ENCODE measurements at regions of chr6 and their contacts with region 1.

Region 1: DNA sequence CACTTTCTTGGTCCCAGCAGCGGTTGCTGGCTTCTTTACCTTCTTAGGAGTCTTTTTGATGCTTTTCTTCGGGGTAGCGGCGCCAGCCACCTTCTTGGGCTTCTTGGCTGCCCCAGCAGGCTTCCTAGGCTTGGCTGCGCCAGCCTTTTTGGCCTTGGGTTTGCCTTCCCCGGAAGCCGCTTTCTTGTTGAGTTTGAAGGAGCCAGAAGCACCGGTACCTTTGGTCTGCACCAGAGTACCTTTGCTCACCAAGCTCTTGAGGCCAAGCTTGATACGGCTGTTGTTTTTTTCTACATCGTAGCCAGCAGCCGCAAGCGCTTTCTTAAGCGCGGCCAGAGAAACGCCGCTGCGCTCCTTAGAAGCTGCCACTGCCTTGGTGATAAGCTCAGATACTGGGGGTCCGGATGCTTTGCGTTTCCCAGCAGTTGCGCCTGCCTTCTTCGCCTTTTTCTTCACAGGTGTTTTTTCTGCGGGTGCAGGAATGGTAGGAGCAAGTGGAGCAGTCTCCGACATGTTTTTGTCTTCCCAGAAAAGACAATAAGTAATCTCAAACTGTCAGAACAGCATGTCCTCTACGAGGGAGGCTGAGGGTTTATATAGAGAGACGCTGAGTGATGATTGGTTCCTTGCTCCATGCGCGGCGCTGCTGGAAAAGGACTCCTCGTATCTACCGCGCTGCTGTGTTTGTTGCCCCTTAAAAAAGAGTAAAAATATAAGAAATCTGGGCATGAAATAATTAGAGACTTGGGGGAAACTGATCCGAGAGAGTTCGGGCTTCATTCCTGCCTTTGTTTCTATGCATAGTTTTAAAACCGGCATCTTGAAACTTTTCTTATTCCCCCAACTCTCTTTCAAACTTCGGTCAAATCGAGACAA is 130.3 kb upstream of the BTN3A2 start:
- DNase-seq: peak; percentile 70 to 87 (median 85)
- H3K4me3 ChIP-seq: peak overlapping the region; percentile 66 to 95
- H3K4me3 Mint-ChIP-seq: peak overlapping the region; percentile 93 to 99 (median 96)
- H3K27ac ChIP-seq: peak overlapping the region; percentile 83
- H3K27ac Mint-ChIP-seq: peak overlapping the region; percentile 90 to 99 (median 96)
- H3K4me1 ChIP-seq: peaks cover 23% of the 10 kb centered on the region
- H3K4me1 Mint-ChIP-seq: peaks cover 18 to 43% (median 26%) of the 10 kb centered on the region in 4 donors
- H3K27me3 ChIP-seq: no peaks in the 10 kb centered on the region
- H3K27me3 Mint-ChIP-seq: no peaks in the 10 kb centered on the region

Region 2: DNA sequence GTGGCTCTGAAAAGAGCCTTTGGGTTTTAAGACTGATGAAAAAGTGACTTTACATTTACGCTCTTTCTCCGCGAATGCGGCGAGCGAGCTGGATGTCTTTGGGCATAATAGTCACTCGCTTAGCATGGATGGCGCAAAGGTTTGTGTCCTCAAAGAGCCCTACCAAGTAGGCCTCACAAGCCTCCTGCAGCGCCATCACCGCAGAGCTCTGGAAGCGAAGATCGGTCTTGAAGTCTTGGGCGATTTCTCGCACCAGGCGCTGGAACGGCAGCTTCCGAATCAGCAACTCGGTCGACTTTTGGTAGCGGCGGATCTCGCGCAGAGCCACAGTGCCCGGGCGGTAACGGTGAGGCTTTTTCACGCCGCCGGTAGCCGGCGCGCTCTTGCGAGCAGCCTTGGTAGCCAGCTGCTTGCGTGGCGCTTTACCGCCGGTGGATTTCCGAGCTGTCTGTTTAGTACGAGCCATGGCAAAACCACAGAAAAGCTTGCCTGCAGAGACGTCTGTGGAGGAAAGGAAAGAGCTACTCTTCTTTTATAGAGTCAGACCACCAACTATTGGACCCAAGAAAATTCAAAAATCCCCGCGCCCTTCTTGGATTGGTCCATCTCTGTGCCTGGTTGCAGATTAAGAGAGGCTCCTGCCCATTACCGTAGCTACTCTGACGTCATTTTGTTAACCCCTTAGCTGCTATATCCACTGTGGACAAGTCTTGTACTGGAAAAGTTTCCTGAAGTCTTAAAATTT is 202.9 kb before region 1 on chr6:
- CTCF ChIA-PET with region 1: no interaction called
- POLR2A ChIA-PET with region 1: interaction called, 42 read pairs
- intact Hi-C with region 1: no loop called
- DNase-seq: peak; percentile 86 to 94 (median 89)
- H3K4me3 ChIP-seq: peak overlapping the region; percentile 53 to 67
- H3K4me3 Mint-ChIP-seq: peak overlapping the region; percentile 91 to 99 (median 94)
- H3K27ac ChIP-seq: peak overlapping the region; percentile 71
- H3K27ac Mint-ChIP-seq: peak overlapping the region; percentile 89 to 98 (median 96)
- H3K4me1 ChIP-seq: peaks cover 35% of the 10 kb centered on the region
- H3K4me1 Mint-ChIP-seq: peaks cover 33 to 54% (median 44%) of the 10 kb centered on the region in 4 donors
- H3K27me3 ChIP-seq: no peaks in the 10 kb centered on the region
- H3K27me3 Mint-ChIP-seq: peaks cover 0 to 3% of the 10 kb centered on the region in 2 donors

Region 3: GRCh38 chr6:26103770-26104456 is 130.7 kb before region 1 on chr6:
- CTCF ChIA-PET with region 1: no interaction called
- POLR2A ChIA-PET with region 1: interaction called, 18 read pairs
- intact Hi-C with region 1: no loop called
- DNase-seq: peak; percentile 93 to 96 (median 94)
- H3K4me3 ChIP-seq: peak overlapping the region; percentile 36 to 39
- H3K4me3 Mint-ChIP-seq: peak overlapping the region; percentile 84 to 96 (median 92)
- H3K27ac ChIP-seq: peak overlapping the region; percentile 66
- H3K27ac Mint-ChIP-seq: peak overlapping the region; percentile 96 to 100 (median 99)
- H3K4me1 ChIP-seq: peaks cover 17% of the 10 kb centered on the region
- H3K4me1 Mint-ChIP-seq: peaks cover 11 to 19% (median 15%) of the 10 kb centered on the region in 4 donors
- H3K27me3 ChIP-seq: no peaks in the 10 kb centered on the region
- H3K27me3 Mint-ChIP-seq: peaks cover 2 to 6% of the 10 kb centered on the region in 2 donors

Region 4: DNA sequence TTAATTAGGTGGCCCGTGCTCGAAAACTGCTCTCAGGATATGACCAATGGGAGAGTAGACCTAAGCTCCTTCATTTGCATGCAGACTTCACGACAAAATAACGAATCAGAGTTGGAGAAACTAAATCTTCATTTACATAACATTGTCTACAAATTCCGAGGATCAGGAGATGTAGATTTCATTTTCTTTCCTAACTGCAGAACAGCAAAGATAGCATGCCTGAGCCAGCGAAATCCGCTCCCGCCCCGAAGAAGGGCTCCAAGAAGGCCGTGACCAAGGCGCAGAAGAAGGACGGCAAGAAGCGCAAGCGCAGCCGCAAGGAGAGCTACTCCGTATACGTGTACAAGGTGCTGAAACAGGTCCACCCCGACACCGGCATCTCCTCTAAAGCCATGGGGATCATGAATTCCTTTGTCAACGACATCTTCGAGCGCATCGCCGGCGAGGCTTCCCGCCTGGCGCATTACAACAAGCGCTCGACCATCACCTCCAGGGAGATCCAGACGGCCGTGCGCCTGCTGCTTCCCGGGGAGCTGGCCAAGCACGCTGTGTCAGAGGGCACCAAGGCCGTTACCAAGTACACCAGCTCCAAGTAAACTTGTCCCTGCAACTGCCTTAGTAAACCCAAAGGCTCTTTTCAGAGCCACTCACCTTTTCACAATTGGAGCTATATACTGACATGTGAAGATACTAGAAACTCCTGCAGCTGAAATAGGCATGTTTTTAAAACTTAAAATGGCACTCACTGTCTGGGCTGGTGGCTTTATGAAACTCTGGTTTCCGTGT is 50.9 kb before region 1 on chr6:
- CTCF ChIA-PET with region 1: interaction called, 3 read pairs
- POLR2A ChIA-PET with region 1: interaction called, 94 read pairs
- intact Hi-C with region 1: no loop called
- DNase-seq: peak; percentile 72 to 81 (median 79)
- H3K4me3 ChIP-seq: peak overlapping the region; percentile 2 to 69
- H3K4me3 Mint-ChIP-seq: peak overlapping the region; percentile 90 to 100 (median 96)
- H3K27ac ChIP-seq: peak overlapping the region; percentile 67
- H3K27ac Mint-ChIP-seq: peak overlapping the region; percentile 78 to 99 (median 95)
- H3K4me1 ChIP-seq: peaks cover 45% of the 10 kb centered on the region
- H3K4me1 Mint-ChIP-seq: peaks cover 29 to 54% (median 37%) of the 10 kb centered on the region in 4 donors
- H3K27me3 ChIP-seq: no peaks in the 10 kb centered on the region
- H3K27me3 Mint-ChIP-seq: no peaks in the 10 kb centered on the region

Region 5: GRCh38 chr6:26204332-26205165 is 30.1 kb before region 1 on chr6:
- CTCF ChIA-PET with region 1: interaction called, 3 read pairs
- POLR2A ChIA-PET with region 1: interaction called, 502 read pairs
- intact Hi-C with region 1: loop called (anchors 1 kb)
- DNase-seq: peak; percentile 85 to 95 (median 89)
- H3K4me3 ChIP-seq: peak overlapping the region; percentile 48 to 87
- H3K4me3 Mint-ChIP-seq: no peak overlapping the region
- H3K27ac ChIP-seq: peak overlapping the region; percentile 82
- H3K27ac Mint-ChIP-seq: no peak overlapping the region
- H3K4me1 ChIP-seq: peaks cover 39% of the 10 kb centered on the region
- H3K4me1 Mint-ChIP-seq: peaks cover 8 to 26% (median 13%) of the 10 kb centered on the region in 4 donors
- H3K27me3 ChIP-seq: no peaks in the 10 kb centered on the region
- H3K27me3 Mint-ChIP-seq: peaks cover 0 to 3% of the 10 kb centered on the region in 2 donors

Region 6: DNA sequence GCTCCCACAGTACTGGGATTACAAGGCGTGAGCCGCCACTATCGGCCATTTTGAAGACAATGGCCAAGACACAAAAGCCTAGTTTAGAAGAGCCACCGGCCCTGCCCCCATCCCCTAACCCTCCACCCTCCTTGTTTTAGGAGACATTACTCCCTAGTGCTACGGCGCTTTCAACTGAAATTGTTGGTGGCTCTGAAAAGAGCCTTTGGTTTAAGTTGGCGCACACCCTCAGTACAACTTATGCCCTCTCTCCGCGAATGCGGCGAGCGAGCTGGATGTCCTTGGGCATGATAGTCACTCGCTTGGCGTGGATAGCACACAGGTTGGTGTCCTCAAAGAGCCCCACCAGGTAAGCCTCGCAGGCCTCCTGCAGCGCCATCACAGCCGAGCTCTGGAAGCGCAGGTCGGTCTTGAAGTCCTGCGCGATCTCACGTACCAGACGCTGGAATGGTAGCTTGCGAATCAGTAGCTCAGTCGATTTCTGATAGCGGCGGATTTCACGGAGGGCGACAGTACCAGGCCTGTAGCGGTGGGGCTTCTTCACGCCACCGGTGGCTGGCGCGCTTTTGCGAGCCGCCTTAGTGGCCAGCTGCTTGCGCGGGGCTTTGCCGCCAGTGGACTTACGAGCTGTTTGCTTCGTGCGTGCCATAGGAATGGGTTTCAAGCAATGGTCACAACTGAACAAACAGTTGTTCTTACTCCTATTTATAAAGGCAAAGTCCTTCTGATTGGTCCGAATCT is 15.5 kb after region 1 on chr6:
- CTCF ChIA-PET with region 1: no interaction called
- POLR2A ChIA-PET with region 1: no interaction called
- intact Hi-C with region 1: loop called (anchors 1 kb)
- DNase-seq: peak; percentile 79 to 88 (median 83)
- H3K4me3 ChIP-seq: peak overlapping the region; percentile 86 to 88
- H3K4me3 Mint-ChIP-seq: peak overlapping the region; percentile 92 to 99 (median 98)
- H3K27ac ChIP-seq: peak overlapping the region; percentile 59
- H3K27ac Mint-ChIP-seq: peak overlapping the region; percentile 85 to 97 (median 94)
- H3K4me1 ChIP-seq: peaks cover 25% of the 10 kb centered on the region
- H3K4me1 Mint-ChIP-seq: peaks cover 28 to 53% (median 40%) of the 10 kb centered on the region in 4 donors
- H3K27me3 ChIP-seq: no peaks in the 10 kb centered on the region
- H3K27me3 Mint-ChIP-seq: no peaks in the 10 kb centered on the region

Region 7: DNA sequence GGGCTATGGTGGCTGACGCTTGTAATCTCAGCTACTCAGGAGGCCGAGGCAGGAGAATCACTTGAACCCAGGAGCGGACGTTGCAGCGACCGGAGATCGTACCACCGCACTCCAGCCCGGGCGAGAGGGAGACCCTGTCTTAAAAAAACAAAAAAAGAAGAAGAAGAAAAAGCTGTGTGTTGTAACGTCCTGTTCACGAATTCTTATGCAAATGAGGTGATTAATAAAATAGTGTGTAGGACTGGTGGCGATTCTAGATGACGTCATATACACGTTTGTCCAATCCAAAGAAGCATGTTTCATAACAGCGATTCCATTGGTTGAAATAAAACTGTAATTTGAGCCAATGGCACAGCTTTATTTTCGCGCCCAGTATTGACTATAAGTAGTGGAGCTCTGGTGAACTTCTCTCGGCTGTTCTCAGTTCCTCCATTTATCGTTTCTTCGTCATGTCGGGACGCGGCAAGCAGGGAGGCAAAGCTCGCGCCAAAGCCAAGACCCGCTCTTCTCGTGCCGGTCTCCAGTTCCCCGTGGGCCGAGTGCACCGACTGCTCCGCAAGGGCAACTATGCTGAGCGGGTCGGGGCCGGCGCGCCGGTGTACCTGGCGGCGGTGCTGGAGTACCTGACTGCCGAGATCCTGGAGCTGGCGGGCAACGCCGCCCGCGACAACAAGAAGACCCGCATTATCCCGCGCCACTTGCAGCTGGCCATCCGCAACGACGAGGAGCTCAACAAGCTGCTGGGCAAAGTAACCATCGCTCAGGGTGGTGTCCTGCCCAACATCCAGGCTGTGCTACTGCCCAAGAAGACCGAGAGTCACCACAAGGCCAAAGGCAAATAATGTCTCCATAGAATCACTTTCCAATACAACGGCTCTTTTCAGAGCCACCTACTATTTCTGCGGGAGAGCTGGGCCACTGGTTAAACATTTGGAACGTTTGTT is 1630.5 kb after region 1 on chr6:
- CTCF ChIA-PET with region 1: no interaction called
- POLR2A ChIA-PET with region 1: interaction called, 17 read pairs
- intact Hi-C with region 1: no loop called
- DNase-seq: peak; percentile 86 to 93 (median 91)
- H3K4me3 ChIP-seq: peak overlapping the region; percentile 33 to 69
- H3K4me3 Mint-ChIP-seq: peak overlapping the region; percentile 96 to 99 (median 99)
- H3K27ac ChIP-seq: peak overlapping the region; percentile 62
- H3K27ac Mint-ChIP-seq: peak overlapping the region; percentile 94 to 99 (median 98)
- H3K4me1 ChIP-seq: peaks cover 31% of the 10 kb centered on the region
- H3K4me1 Mint-ChIP-seq: peaks cover 18 to 46% (median 34%) of the 10 kb centered on the region in 4 donors
- H3K27me3 ChIP-seq: no peaks in the 10 kb centered on the region
- H3K27me3 Mint-ChIP-seq: no peaks in the 10 kb centered on the region